ENCODE measurements at regions of chr3 and their contacts with region 1.

Region 1: GRCh38 chr3:110069761-110070160 is 732.4 kb upstream of the DPPA4 start:
- DNase-seq: no peak
- H3K4me3 ChIP-seq: no peak overlapping the region
- CTCF ChIP-seq: no peak
- POLR2A ChIP-seq: no peak

Region 2: DNA sequence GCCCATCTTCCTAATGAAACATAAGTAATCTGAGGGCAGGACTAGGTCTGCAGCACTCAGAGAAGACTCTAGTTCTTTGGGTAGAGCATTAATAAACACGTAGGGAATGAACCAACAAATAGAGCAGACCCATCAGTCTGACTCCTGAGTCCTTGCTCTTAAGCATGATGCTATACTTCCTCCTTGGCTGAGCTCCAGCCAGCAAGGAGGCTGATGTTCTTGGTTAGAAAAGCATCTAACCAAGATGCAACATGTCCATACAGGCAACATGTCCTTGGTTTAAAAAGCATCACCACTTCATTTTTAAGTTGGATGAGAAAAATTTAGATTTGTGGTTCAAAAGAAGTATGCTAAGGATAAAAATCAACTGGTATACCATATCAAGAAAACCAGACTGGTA is 1550.9 kb before region 1 on chr3:
- intact Hi-C with region 1: loop called (anchors 5 kb)
- DNase-seq: peak in 1 of 2 donors; percentile 16
- H3K4me3 ChIP-seq: no peak overlapping the region
- CTCF ChIP-seq: no peak
- POLR2A ChIP-seq: no peak

Measured in lower leg skin (tissue), 4 donors.